Activated naive CD4-positive, alpha-beta T cell treated with anti-CD3 and anti-CD28 coated beads, Interleukin-2, amount 10 ng/mL, durations not matched to agents 7 days and 5 days (primary cell): ENCODE measurements at regions of chr5 and their contacts with region 1.

Region 1: GRCh38 chr5:150778517-150779396 is at the start of gene SMIM3:
- DNase-seq: peak; percentile 83
- H3K4me3 Mint-ChIP-seq: peak within 1 kb of the TSS; percentile 100
- H3K27ac Mint-ChIP-seq: peak within 1 kb of the TSS; percentile 88
- H3K4me1 Mint-ChIP-seq: peaks cover 59% of the 10 kb centered on the region
- H3K27me3 Mint-ChIP-seq: peaks cover 3% of the 10 kb centered on the region

Region 2: GRCh38 chr5:150560401-150561193 is 218.2 kb before region 1 on chr5:
- CTCF ChIA-PET with region 1: interaction called, 22 read pairs
- DNase-seq: peak; percentile 91
- H3K4me3 Mint-ChIP-seq: no peak overlapping the region
- H3K27ac Mint-ChIP-seq: no peak overlapping the region
- H3K4me1 Mint-ChIP-seq: no peaks in the 10 kb centered on the region
- H3K27me3 Mint-ChIP-seq: peaks cover 7% of the 10 kb centered on the region

Region 3: GRCh38 chr5:150700594-150701293 is 78.0 kb before region 1 on chr5 and contains the start of gene RBM22:
- CTCF ChIA-PET with region 1: interaction called, 57 read pairs
- DNase-seq: peak; percentile 95
- H3K4me3 Mint-ChIP-seq: no peak within 1 kb of the TSS
- H3K27ac Mint-ChIP-seq: no peak within 1 kb of the TSS
- H3K4me1 Mint-ChIP-seq: peaks cover 10% of the 10 kb centered on the region
- H3K27me3 Mint-ChIP-seq: no peaks in the 10 kb centered on the region

Region 4: DNA sequence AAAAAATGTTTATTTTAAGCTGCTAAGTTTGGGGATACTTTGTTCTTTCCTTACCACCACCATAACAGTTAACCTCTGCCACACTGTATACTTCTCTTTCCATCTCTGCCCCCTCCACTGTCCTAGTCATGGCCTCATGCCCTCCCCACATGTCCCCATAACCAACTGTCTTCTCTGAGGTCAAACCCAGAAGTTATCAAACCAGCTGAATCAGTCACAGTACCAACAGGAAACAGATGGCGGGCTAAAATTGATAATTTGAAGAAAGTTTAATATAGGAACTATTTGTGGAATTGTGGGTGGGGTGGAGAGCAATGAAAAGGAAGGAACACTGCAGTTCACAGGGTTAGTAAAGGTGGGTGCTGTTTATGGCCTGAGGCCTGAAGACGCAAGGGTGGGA is 14.2 kb before region 1 on chr5:
- CTCF ChIA-PET with region 1: interaction called, 15 read pairs
- DNase-seq: no peak
- H3K4me3 Mint-ChIP-seq: no peak overlapping the region
- H3K27ac Mint-ChIP-seq: no peak overlapping the region
- H3K4me1 Mint-ChIP-seq: peaks cover 4% of the 10 kb centered on the region
- H3K27me3 Mint-ChIP-seq: no peaks in the 10 kb centered on the region

Region 5: DNA sequence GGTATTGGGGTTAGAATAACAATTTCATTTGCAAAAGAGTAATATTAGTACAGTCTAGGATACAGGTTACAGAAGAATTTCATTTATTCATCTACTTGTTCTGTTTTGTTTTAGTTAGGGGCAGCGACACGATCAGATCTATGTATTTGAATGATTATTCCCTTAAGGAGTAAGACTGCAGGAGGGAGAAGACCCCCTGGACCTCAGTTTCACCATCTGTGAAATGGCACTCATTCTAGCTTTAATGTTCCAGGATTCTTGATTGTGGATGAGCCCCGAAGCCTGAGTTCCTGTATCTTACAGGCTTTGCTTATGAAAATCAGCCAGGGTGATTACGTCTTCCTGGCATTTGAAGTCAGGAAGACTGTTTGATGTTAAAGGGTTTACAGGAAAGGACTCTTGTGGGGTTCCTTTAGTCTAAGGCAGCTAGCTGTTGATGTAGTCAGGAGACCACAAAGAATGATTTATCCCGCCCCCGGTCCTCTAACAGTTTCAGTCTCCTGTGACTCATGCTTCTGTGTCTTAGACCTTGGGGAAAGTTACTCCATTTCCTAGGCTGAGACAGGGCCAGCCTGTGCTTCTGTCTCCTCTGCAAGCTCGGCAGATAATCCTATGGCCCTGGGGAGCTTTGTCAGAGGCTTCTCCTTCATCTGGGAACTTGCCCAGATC is 11.3 kb after region 1 on chr5:
- CTCF ChIA-PET with region 1: interaction called, 10 read pairs
- DNase-seq: peak; percentile 74
- H3K4me3 Mint-ChIP-seq: peak overlapping the region; percentile 31
- H3K27ac Mint-ChIP-seq: peak overlapping the region; percentile 80
- H3K4me1 Mint-ChIP-seq: peaks cover 55% of the 10 kb centered on the region
- H3K27me3 Mint-ChIP-seq: no peaks in the 10 kb centered on the region

Region 6: GRCh38 chr5:150801117-150801927 is 22.6 kb after region 1 on chr5:
- CTCF ChIA-PET with region 1: interaction called, 12 read pairs
- DNase-seq: no peak
- H3K4me3 Mint-ChIP-seq: no peak overlapping the region
- H3K27ac Mint-ChIP-seq: no peak overlapping the region
- H3K4me1 Mint-ChIP-seq: peaks cover 12% of the 10 kb centered on the region
- H3K27me3 Mint-ChIP-seq: no peaks in the 10 kb centered on the region